Adrenal gland (tissue), 19 donors: ENCODE measurements at regions of chr10 and their contacts with region 1.

Region 1: DNA sequence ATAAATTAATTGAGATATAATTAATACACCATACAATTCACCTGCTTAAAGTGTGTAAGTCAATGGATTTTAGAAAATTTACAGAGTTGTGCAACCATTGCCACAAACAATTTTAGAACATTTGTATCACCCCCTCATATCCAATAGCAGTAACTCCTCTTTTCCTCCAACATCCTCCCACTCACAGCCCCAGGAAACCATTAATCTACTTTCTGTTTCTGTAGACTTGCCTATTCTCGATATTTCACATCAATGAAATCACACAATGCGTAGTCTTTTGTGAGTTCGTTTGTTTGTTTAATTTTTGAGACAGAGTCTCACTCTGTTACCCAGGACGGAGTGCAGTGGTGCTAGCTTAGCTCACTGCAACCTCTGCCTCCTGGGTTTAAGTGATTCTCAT is 13.7 kb upstream of the HERC4 start:
- DNase-seq: no peak
- H3K4me3 ChIP-seq: no peak overlapping the region
- H3K27ac ChIP-seq: no peak overlapping the region
- H3K4me1 ChIP-seq: no peaks in the 10 kb centered on the region
- H3K27me3 ChIP-seq: no peaks in the 10 kb centered on the region
- CTCF ChIP-seq: no peak
- POLR2A ChIP-seq: no peak

Region 2: DNA sequence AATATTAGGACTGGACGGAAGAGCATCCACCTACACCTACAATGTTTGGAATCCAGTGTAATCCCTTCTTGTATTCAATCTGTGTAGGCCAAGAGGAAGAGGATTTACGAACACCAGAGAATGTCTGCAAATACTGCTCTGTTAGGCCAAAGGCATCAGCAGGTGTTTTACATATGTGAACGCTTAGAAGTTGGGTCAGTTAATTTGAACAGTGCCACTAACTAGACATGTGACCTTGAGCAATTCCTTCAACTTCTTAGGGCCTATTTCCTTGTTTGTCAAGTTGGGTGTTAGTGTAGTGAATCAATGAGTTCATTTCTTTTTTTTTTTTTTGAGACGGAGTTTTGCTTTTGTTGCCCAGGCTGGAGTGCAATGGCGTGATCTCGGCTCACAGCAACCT is 56.0 kb after region 1 on chr10:
- intact Hi-C with region 1: loop called in 1 of 2 experiments (anchors 5 kb)
- DNase-seq: no peak
- H3K4me3 ChIP-seq: no peak overlapping the region
- H3K27ac ChIP-seq: no peak overlapping the region
- H3K4me1 ChIP-seq: no peaks in the 10 kb centered on the region
- H3K27me3 ChIP-seq: no peaks in the 10 kb centered on the region
- CTCF ChIP-seq: no peak
- POLR2A ChIP-seq: no peak